ENCODE measurements at regions of chr6 and their contacts with region 1.

Region 1: DNA sequence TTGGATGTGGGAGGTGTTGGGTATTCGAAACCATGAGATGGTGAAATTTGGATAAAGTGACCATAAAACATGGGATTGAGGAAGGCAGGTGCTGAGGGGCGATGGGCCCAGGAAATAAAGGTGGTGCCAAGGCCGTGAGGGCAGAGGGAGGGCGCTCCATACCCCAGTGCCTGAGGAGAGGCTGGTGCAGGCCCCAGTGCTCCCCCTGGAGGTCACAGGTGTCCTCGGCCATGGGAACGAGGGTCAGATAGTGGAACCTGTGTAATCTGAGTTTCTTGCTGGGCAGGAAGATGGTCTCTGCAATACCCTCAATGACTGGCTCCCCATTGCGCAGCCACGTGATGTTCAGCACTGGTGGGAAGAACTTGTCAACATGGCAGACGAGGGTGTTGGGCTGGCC is 16.2 kb downstream of the HLA-DPB1 start:
- DNase-seq: no peak
- H3K4me3 ChIP-seq: no peak overlapping the region
- H3K27ac ChIP-seq: no peak overlapping the region
- H3K4me1 ChIP-seq: no peaks in the 10 kb centered on the region
- H3K27me3 ChIP-seq: no peaks in the 10 kb centered on the region
- CTCF ChIP-seq: no peak
- EP300 ChIP-seq: no peak
- POLR2A ChIP-seq: no peak

Region 2: DNA sequence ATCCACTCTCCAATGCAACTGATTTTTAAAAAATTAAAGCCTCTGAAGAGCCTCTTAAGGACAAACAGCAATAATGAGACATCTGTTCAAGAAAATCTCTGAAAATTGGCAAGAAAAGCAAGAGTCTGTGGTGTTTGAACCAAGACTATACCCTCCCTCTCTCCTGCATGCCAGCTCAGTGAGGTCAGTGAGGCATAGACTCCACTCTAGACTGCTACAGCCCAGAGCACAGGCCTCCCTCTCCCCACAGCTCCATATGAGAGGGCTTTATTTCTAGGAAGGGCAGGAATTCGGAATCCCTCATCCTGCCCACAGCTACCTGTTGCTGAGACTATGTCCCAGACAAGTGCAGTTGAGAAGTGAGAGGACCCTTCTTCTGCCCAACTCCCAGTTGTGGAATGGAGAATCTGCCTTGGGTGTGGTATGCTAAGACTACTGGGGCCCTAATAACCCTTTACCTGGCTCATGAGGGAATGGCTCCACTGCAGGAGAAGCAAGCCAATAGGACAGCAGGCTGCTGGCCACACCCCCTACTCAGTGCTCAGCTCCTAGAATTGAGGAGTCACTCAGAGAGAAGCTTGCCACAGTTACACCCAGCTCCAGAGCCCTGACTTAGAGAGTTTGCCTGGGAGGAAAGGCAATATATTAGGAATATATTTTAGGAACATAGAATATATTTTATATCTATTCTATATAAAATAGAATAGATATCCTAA is 477.4 kb before region 1 on chr6:
- intact Hi-C with region 1: no loop called
- DNase-seq: no peak
- H3K4me3 ChIP-seq: no peak overlapping the region
- H3K27ac ChIP-seq: no peak overlapping the region
- H3K4me1 ChIP-seq: no peaks in the 10 kb centered on the region
- H3K27me3 ChIP-seq: no peaks in the 10 kb centered on the region
- CTCF ChIP-seq: no peak
- EP300 ChIP-seq: no peak
- POLR2A ChIP-seq: no peak

Region 3: DNA sequence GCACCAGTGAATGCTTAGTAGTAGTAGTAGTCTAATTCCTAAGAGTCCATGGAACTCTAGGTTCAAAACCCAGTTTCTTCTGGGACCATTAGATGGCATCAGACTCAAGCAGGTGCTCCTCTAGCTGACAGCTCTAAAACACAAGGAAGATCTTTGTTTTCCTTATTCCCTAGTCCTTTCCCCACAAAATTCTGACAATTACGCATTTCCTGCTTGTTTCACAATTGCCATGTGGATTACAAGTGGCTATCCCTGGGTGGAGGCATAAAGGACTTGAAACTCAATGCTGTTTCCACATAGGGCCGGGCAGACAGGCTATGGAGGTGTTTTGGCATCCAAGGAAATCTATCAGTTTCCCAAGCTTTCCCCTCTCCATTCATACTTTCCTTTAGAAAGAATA is 266.0 kb before region 1 on chr6:
- intact Hi-C with region 1: loop called in 1 of 4 experiments (anchors 5 kb)
- DNase-seq: no peak
- H3K4me3 ChIP-seq: no peak overlapping the region
- H3K27ac ChIP-seq: no peak overlapping the region
- H3K4me1 ChIP-seq: no peaks in the 10 kb centered on the region
- H3K27me3 ChIP-seq: no peaks in the 10 kb centered on the region
- CTCF ChIP-seq: no peak
- EP300 ChIP-seq: no peak
- POLR2A ChIP-seq: no peak

Region 4: DNA sequence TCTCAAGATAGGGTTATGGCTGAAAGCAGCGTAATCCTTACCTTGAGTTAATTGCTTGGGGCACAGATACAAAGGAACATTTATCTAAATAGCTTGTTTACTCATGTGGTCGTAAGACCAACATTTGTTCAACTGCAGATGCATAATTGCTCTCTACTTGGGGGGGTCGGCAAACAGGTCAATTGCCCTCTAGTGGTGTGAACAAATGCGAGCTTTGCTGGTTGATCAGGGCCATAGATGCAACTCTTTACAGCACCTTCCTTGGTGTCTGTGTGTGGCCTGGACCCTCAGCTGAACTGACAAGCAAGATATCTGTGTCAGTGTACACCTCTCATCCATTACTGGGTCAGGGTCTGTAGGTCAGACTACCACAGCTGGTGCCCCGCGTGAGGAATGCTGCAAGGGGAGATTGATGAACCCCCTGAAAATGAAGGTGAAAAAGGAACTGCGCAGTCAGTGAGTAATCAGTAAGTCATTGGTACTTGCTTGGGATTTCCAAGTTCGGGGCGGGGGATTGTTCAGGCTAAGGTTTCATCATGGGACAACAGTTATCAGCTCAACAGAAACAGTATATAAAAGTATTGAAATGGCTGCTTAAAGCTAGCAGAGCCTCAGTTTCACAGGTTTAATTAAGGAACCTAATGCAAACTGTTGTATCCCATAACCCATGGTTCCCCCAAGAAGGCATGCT is 42.5 kb before region 1 on chr6:
- intact Hi-C with region 1: no loop called
- DNase-seq: no peak
- H3K4me3 ChIP-seq: no peak overlapping the region
- H3K27ac ChIP-seq: no peak overlapping the region
- H3K4me1 ChIP-seq: no peaks in the 10 kb centered on the region
- H3K27me3 ChIP-seq: no peaks in the 10 kb centered on the region
- CTCF ChIP-seq: no peak
- EP300 ChIP-seq: no peak
- POLR2A ChIP-seq: no peak

Region 5: DNA sequence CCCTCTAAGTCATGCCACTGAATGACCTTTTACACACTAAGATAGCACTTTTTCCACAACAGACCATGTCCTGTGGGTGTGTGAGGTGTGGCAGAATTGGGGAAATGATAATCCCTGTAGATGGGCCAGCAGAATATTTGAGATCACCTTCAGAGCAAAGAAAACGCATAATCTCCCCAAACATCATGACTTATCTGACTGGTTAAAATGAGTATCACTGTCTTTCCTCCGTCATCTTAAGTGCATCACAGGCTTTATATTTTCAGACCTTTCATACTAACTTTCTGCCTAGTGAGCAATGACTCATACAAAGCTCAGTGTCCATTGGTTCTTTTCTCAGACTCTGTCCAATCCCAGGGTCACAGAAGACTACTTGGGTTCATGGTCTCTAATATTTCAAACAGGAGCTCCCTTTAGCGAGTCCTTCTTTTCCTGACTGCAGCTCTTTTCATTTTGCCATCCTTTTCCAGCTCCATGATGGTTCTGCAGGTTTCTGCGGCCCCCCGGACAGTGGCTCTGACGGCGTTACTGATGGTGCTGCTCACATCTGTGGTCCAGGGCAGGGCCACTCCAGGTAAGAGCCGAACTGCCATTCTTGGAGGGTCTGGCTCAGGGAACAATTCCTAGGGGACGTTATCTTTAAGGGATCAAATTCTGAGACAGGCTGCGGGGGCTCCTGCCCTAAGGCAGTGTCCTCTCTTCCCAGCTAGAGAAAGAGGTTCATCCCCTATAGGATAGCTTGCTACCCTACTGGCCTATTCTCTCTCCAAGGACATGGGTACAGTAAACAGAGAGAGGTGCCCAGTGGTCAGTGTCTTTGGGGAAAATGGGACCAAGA is 16.2 kb before region 1 on chr6 and contains the start of gene HLA-DPB1:
- intact Hi-C with region 1: no loop called
- DNase-seq: no peak
- H3K4me3 ChIP-seq: peak within 1 kb of the TSS; percentile 5
- H3K27ac ChIP-seq: no peak within 1 kb of the TSS
- H3K4me1 ChIP-seq: no peaks in the 10 kb centered on the region
- H3K27me3 ChIP-seq: no peaks in the 10 kb centered on the region
- CTCF ChIP-seq: no peak
- EP300 ChIP-seq: no peak
- POLR2A ChIP-seq: no peak
- total RNA-seq, gene HLA-DPB1: 19.4 to 85.8 (median 44.7) TPM

Region 6: DNA sequence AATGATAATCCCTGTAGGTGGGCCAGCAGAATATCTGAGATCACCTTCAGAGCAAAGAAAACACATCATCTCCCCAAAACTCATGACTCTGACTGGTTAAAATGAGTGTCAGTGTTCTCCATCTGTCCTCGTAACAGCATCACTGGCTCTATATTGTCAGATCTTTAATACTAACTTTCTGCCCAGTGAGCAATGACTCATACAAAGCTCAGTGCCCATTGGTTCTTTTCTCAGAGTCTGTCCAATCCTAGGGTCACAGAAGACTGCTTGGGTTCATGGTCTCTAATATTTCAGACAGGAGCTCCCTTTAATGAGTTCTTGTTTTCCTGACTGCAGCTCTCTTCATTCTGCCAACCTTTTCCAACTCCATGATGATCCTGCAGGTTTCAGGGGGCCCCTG is 20.2 kb after region 1 on chr6:
- intact Hi-C with region 1: loop called in 1 of 4 experiments (anchors 2 kb)
- DNase-seq: no peak
- H3K4me3 ChIP-seq: no peak overlapping the region
- H3K27ac ChIP-seq: no peak overlapping the region
- H3K4me1 ChIP-seq: no peaks in the 10 kb centered on the region
- H3K27me3 ChIP-seq: no peaks in the 10 kb centered on the region
- CTCF ChIP-seq: no peak
- EP300 ChIP-seq: no peak
- POLR2A ChIP-seq: no peak

Region 7: GRCh38 chr6:33356295-33356694 is 264.3 kb after region 1 on chr6:
- intact Hi-C with region 1: no loop called
- DNase-seq: no peak
- H3K4me3 ChIP-seq: no peak overlapping the region
- H3K27ac ChIP-seq: no peak overlapping the region
- H3K4me1 ChIP-seq: no peaks in the 10 kb centered on the region
- H3K27me3 ChIP-seq: no peaks in the 10 kb centered on the region
- CTCF ChIP-seq: no peak
- EP300 ChIP-seq: no peak
- POLR2A ChIP-seq: no peak

Measured in ovary (tissue), 10 donors.